HepG2 (cell line): ENCODE measurements at regions of chr4 and their contacts with region 1.

Region 1: DNA sequence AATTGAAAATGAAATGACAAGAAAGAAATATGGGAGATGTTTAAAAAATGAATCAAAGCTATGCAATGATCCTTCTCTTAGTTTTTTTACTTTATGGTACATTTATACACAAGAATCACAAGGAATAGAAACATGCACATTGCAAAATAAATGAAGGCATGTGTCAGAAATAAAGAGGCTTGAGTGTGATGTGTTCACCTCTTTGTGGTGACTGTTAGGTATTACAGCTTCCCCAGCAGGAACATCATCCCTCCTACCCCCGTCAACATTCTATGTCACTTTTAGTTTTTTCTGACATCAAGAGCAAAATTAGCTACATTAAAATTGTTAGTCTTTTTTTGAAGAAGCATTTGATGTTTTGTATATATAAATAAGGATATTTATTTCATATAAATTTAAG is 214.8 kb downstream of the SLC4A4 start:
- DNase-seq: no peak
- ATAC-seq: peak; percentile 78
- H3K4me3 ChIP-seq: no peak overlapping the region
- H3K27ac ChIP-seq: no peak overlapping the region
- H3K4me1 ChIP-seq: peaks cover 20% of the 10 kb centered on the region
- H3K27me3 ChIP-seq: no peaks in the 10 kb centered on the region; a peak in 1 of 5 replicates
- CTCF ChIP-seq: peak; percentile 42
- EP300 ChIP-seq: no peak
- POLR2A ChIP-seq: no peak
- RAD21 ChIP-seq: no peak

Region 2: GRCh38 chr4:70601422-70602039 is 952.1 kb before region 1 on chr4:
- CTCF ChIA-PET with region 1: no interaction called
- POLR2A ChIA-PET with region 1: no interaction called
- in situ Hi-C with region 1: no loop called
- intact Hi-C with region 1: loop called (anchors 10 kb)
- DNase-seq: peak; percentile 62
- ATAC-seq: peak; percentile 95
- H3K4me3 ChIP-seq: no peak overlapping the region
- H3K27ac ChIP-seq: no peak overlapping the region
- H3K4me1 ChIP-seq: no peaks in the 10 kb centered on the region
- H3K27me3 ChIP-seq: no peaks in the 10 kb centered on the region
- CTCF ChIP-seq: peak; percentile 87
- EP300 ChIP-seq: no peak
- POLR2A ChIP-seq: no peak
- RAD21 ChIP-seq: peak; percentile 69

Region 3: GRCh38 chr4:71184195-71184781 is 369.3 kb before region 1 on chr4:
- CTCF ChIA-PET with region 1: no interaction called
- POLR2A ChIA-PET with region 1: no interaction called
- in situ Hi-C with region 1: loop called (anchors 10 kb)
- intact Hi-C with region 1: no loop called
- DNase-seq: peak; percentile 31
- ATAC-seq: no peak; the same call in 2 of the 3 replicates
- H3K4me3 ChIP-seq: no peak overlapping the region
- H3K27ac ChIP-seq: no peak overlapping the region
- H3K4me1 ChIP-seq: peaks cover 15% of the 10 kb centered on the region
- H3K27me3 ChIP-seq: peaks cover 1 to 34% of the 10 kb centered on the region in 2 experiments; a peak in 3 of 5 replicates
- CTCF ChIP-seq: peak; percentile 67
- EP300 ChIP-seq: no peak
- POLR2A ChIP-seq: no peak
- RAD21 ChIP-seq: no peak

Region 4: DNA sequence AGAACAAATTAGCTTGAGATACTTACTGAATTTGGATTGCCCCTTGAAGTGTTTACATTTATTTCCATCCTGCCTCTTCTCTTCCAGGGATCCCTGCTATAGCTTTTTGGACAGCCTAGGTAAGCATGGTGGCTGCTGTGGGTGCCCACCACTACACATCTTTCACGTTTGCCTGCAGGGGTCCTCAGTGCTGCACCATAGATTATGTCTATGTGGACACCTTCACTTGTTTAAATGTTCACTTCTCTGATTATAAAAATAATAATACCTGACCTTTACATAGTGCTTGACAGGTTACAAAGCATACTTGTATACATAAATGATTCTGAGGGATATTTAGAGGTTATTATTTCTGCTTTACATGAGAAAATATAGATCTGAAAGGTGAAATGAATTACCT is 282.7 kb before region 1 on chr4:
- CTCF ChIA-PET with region 1: no interaction called
- POLR2A ChIA-PET with region 1: no interaction called
- in situ Hi-C with region 1: no loop called
- intact Hi-C with region 1: loop called (anchors 2 kb)
- DNase-seq: peak; percentile 29
- ATAC-seq: peak; percentile 86
- H3K4me3 ChIP-seq: no peak overlapping the region
- H3K27ac ChIP-seq: no peak overlapping the region
- H3K4me1 ChIP-seq: no peaks in the 10 kb centered on the region
- H3K27me3 ChIP-seq: no peaks in the 10 kb centered on the region
- CTCF ChIP-seq: peak; percentile 58
- EP300 ChIP-seq: no peak
- POLR2A ChIP-seq: no peak
- RAD21 ChIP-seq: no peak